ENCODE measurements at regions of chr17 and their contacts with region 1.

Region 1: DNA sequence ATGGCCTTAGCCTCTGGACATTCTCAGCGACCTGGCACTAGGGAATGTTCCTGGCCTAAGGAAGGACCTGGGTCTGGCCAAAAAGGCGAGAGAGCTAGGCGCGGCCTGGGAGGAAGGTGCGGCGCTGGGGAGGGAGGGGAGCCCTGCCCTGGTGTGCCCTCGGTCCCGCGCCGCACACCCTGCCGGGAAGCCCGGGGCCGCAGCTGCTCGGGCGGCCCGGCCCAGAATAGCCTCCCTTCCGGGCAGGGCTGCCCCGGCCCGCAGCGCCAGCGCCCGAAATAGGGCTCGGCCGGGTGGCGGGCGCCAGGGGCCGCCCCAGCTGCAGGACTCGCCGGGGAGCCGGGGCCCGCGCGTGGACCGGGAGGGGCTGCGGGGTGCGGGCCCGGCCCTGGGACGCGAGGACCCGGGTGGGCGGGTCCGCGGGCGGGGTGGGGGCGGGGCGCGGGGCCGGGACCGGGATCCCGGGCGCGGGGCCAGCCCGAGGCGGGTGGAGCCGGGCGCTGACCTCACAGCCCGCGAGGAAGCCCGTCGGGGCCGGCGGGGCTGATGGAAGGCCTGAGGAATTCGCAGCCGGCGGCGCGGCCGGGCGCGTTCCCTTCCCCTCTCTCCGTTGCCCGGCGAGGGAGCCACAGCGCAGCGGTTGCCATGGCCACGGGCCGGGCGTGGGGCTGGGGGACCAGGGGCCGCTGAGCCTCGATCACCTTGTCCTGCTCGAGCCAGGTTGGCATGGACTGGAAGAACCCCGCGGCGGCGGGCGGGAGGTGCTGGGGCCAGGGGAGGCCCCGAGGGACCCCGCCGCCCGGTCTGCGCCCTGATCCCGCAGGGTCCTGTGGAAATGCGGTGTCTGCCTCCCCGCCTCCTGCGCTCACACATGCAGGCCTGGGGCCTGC is 18.1 kb downstream of the SOCS3 start:
- DNase-seq: peak; percentile 43
- H3K4me3 ChIP-seq: peak overlapping the region in 2 of 3 experiments; percentile 17 to 26
- H3K27ac ChIP-seq: peak overlapping the region; percentile 82
- H3K4me1 ChIP-seq: peaks cover 36% of the 10 kb centered on the region
- H3K27me3 ChIP-seq: no peaks in the 10 kb centered on the region
- CTCF ChIP-seq: no peak
- POLR2A ChIP-seq: peak; percentile 27

Region 2: DNA sequence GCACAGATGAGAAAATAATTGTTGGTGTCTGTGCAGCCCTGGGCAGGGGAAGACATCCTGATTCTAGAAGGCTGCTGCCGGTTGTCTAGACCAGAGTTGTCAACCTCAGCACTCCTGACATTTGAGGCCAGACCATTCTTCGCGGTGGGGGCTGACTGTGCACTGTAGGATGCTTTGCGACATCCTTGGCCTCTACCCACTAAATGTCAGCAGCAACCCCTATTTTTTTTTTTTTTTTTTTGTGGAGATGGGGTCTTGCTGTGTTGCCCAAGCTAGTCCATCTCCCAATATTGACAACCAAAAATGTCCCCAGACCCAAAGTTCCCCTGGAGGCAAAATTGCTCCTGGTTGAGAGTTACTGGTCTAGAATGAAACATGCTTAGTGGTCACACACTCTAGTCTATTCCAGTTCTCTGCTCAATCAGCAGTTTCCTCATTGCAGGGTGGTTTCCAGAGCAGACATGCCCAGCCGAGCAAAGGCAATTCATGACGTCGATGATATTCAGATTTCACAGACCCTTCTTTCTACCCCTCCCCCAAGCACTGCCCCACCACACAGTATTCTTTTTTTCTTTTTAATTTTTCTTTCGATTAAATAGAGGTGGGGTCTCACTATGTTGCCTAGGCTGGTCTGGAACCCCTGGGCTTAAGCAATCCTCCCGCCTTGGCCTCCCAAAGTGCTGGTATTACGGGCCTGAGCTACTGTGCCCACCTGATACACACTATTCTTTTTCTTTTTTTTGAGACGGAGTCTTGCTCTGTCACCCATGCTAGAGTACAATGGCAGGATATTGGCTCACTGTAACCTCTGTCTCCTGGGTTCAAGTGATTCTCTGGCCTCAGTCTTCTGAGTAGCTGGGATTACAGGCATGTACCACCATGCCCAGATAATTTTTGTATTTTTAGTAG is 186.6 kb before region 1 on chr17:
- CTCF ChIA-PET with region 1: no interaction called
- POLR2A ChIA-PET with region 1: no interaction called
- dilution Hi-C with region 1: no loop called
- intact Hi-C with region 1: no loop called
- DNase-seq: no peak
- H3K4me3 ChIP-seq: no peak overlapping the region
- H3K27ac ChIP-seq: no peak overlapping the region
- H3K4me1 ChIP-seq: peaks cover 6% of the 10 kb centered on the region
- H3K27me3 ChIP-seq: no peaks in the 10 kb centered on the region
- CTCF ChIP-seq: no peak
- POLR2A ChIP-seq: no peak

Region 3: DNA sequence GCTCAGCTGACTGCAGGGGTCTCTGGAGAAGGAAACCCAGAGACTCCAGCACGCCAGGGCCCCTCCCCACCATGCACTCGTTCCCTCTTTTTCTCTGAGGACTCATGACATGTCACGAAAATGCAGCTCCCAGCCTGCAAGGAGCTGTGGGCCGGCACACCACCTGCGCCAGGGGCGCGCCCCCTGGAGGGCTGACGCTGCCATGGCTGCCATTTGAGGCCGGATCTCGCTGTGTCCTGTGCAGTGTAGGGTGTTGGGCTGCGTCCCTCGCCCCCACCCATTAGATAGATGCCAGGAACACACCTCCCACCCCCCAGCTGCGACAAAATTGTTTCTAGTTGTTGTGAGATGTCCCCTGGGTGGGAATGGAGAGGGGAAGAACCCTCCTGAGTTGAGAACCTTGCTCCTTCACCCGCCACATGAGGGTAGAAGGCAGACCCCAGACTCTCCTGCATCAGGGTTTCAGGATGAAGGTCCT is 165.2 kb before region 1 on chr17:
- CTCF ChIA-PET with region 1: no interaction called
- POLR2A ChIA-PET with region 1: no interaction called
- dilution Hi-C with region 1: no loop called
- intact Hi-C with region 1: no loop called
- DNase-seq: peak; percentile 52
- H3K4me3 ChIP-seq: no peak overlapping the region
- H3K27ac ChIP-seq: no peak overlapping the region
- H3K4me1 ChIP-seq: peaks cover 8% of the 10 kb centered on the region
- H3K27me3 ChIP-seq: no peaks in the 10 kb centered on the region
- CTCF ChIP-seq: peak; percentile 96 to 98
- POLR2A ChIP-seq: no peak

Region 4: DNA sequence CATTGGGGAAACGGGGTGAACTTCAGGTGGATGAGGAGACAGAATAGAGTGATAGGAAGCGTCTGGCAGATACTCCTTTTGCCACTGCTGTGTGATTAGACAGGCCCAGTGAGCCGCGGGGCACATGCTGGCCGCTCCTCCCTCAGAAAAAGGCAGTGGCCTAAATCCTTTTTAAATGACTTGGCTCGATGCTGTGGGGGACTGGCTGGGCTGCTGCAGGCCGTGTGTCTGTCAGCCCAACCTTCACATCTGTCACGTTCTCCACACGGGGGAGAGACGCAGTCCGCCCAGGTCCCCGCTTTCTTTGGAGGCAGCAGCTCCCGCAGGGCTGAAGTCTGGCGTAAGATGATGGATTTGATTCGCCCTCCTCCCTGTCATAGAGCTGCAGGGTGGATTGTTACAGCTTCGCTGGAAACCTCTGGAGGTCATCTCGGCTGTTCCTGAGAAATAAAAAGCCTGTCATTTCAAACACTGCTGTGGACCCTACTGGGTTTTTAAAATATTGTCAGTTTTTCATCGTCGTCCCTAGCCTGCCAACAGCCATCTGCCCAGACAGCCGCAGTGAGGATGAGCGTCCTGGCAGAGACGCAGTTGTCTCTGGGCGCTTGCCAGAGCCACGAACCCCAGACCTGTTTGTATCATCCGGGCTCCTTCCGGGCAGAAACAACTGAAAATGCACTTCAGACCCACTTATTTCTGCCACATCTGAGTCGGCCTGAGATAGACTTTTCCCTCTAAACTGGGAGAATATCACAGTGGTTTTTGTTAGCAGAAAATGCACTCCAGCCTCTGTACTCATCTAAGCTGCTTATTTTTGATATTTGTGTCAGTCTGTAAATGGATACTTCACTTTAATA is 117.3 kb before region 1 on chr17:
- CTCF ChIA-PET with region 1: no interaction called
- POLR2A ChIA-PET with region 1: no interaction called
- dilution Hi-C with region 1: no loop called
- intact Hi-C with region 1: no loop called
- DNase-seq: no peak
- H3K4me3 ChIP-seq: no peak overlapping the region
- H3K27ac ChIP-seq: no peak overlapping the region
- H3K4me1 ChIP-seq: peaks cover 31% of the 10 kb centered on the region
- H3K27me3 ChIP-seq: no peaks in the 10 kb centered on the region
- CTCF ChIP-seq: no peak
- POLR2A ChIP-seq: no peak

Region 5: GRCh38 chr17:78353834-78354233 is 12.0 kb after region 1 on chr17:
- CTCF ChIA-PET with region 1: interaction called, 7 read pairs
- POLR2A ChIA-PET with region 1: interaction called, 12 read pairs
- dilution Hi-C with region 1: no loop called
- intact Hi-C with region 1: no loop called
- DNase-seq: no peak
- H3K4me3 ChIP-seq: no peak overlapping the region
- H3K27ac ChIP-seq: peak overlapping the region; percentile 84
- H3K4me1 ChIP-seq: peaks cover 52% of the 10 kb centered on the region
- H3K27me3 ChIP-seq: no peaks in the 10 kb centered on the region
- CTCF ChIP-seq: no peak
- POLR2A ChIP-seq: no peak

Measured in endothelial cell of umbilical vein (primary cell).